Activated CD4-positive, alpha-beta memory T cell treated with anti-CD3 and anti-CD28 coated beads, Interleukin-2, amount 10 ng/mL, durations not matched to agents 7 days and 5 days (primary cell): ENCODE measurements at regions of chr14 and their contacts with region 1.

Region 1: DNA sequence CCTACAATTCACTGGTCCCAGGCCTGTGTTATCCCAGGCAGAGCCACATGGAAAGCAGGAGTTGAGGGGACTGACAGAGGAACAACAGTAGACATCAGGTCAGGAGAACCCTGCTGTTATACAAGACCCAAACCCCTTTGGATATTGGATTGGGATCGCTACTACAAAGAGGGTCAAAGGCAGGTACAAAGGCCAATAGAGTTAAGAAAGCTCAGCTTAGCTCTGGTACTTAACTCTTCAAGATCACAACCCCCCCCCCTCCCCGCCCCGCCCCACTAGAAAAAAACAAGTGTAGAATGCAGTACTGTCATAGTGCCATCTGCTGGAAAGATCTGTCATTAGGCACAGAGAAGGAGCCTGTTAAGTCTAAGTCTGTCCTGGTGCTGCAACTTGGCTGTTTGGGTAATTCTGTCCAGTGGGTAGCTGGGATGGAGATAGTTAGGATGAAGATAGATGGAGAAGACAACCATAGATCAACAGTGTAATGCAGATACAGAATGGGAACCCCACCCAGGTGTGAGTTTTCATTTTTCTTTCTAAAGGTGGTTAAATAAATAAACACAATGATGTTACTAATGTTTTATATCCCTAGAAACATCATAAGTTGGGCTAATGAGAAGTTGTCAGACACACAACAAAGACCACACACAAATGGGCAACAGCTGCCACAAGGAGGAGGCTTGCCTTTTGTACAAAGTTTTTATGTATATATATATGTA is 17.2 kb downstream of the REM2 start:
- DNase-seq: peak; percentile 48
- H3K4me3 Mint-ChIP-seq: no peak overlapping the region
- H3K27ac Mint-ChIP-seq: peak overlapping the region; percentile 44
- H3K4me1 Mint-ChIP-seq: peaks cover 19% of the 10 kb centered on the region
- H3K27me3 Mint-ChIP-seq: no peaks in the 10 kb centered on the region

Region 2: DNA sequence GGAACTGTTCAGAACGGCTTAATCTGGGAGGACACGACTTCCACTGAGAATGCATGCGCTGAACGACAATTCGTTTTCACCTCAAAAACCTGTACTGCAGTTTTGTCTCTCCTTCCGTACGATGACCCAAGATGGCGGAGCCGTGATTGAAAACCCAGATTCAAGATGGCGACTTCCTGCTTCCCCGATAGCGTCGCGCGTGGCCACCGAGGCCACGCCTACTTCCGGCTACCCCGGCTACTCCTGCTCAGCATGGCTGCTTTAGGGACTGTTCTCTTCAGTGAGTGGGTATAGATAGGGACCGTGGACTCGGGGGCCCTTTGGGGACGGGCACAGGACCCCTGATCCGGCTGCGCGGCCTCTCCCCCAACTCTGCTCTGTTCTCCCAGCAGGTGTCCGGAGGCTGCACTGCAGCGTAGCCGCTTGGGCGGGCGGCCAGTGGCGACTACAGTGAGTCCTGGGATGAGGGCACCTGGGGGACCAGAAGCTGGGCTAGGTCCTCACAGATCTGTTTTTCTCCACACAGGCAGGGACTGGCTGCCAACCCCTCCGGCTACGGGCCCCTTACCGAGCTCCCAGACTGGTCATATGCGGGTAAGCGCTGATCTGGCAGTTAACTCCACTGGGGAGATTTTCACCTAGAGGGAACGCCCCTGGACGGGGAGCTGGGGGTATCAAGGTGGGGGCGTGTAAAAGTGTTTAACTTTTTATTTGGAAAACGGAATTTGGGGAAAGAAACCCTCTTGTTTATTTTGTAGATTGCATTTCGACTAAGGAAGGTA is 70.4 kb before region 1 on chr14 and contains the start of gene MRPL52:
- CTCF ChIA-PET with region 1: interaction called, 55 read pairs
- POLR2A ChIA-PET with region 1: no interaction called
- DNase-seq: peak; percentile 93
- H3K4me3 Mint-ChIP-seq: peak within 1 kb of the TSS; percentile 87
- H3K27ac Mint-ChIP-seq: peak within 1 kb of the TSS; percentile 90
- H3K4me1 Mint-ChIP-seq: peaks cover 33% of the 10 kb centered on the region
- H3K27me3 Mint-ChIP-seq: no peaks in the 10 kb centered on the region
- total RNA-seq, gene MRPL52: 108 to 119 TPM

Region 3: DNA sequence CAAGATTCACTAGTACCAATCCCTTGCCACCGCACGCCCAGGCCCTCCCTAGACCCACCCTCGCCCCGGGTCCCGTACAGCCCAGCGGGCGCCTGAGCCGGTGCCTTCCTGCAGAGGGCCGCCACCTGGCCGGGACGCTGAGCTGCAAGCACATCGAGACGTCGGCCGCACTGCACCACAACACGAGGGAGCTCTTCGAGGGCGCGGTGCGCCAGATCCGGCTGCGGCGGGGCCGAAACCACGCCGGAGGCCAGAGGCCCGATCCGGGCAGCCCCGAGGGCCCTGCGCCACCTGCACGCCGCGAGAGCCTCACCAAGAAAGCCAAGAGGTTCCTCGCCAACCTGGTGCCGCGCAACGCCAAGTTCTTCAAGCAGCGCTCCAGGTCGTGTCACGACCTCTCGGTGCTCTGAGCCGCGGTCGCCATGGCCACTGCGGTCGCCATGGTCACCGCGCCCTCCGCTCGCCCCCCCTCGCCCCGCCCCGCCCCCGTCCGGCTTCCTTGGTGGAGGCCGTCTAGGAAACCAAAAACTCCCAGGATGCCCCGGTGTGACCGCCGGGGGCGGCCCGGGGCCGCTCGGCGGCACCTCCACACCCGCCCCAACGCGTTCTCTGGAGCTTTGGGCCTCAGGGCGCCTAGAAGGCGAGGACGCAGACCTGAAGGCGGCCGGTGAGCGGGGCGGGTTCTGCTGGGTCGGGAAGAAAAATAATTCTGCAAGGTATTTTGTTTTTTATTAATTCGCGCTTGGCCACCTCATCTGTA is 13.6 kb before region 1 on chr14:
- CTCF ChIA-PET with region 1: interaction called, 37 read pairs
- POLR2A ChIA-PET with region 1: interaction called, 12 read pairs
- DNase-seq: peak; percentile 85
- H3K4me3 Mint-ChIP-seq: peak overlapping the region; percentile 84
- H3K27ac Mint-ChIP-seq: peak overlapping the region; percentile 89
- H3K4me1 Mint-ChIP-seq: peaks cover 44% of the 10 kb centered on the region
- H3K27me3 Mint-ChIP-seq: peaks cover 23% of the 10 kb centered on the region

Region 4: GRCh38 chr14:23327947-23328744 is 427.9 kb after region 1 on chr14:
- CTCF ChIA-PET with region 1: no interaction called
- POLR2A ChIA-PET with region 1: no interaction called
- DNase-seq: peak; percentile 67
- H3K4me3 Mint-ChIP-seq: no peak overlapping the region
- H3K27ac Mint-ChIP-seq: no peak overlapping the region
- H3K4me1 Mint-ChIP-seq: peaks cover 8% of the 10 kb centered on the region
- H3K27me3 Mint-ChIP-seq: no peaks in the 10 kb centered on the region